ENCODE measurements at regions of chr9 and their contacts with region 1.

Region 1: DNA sequence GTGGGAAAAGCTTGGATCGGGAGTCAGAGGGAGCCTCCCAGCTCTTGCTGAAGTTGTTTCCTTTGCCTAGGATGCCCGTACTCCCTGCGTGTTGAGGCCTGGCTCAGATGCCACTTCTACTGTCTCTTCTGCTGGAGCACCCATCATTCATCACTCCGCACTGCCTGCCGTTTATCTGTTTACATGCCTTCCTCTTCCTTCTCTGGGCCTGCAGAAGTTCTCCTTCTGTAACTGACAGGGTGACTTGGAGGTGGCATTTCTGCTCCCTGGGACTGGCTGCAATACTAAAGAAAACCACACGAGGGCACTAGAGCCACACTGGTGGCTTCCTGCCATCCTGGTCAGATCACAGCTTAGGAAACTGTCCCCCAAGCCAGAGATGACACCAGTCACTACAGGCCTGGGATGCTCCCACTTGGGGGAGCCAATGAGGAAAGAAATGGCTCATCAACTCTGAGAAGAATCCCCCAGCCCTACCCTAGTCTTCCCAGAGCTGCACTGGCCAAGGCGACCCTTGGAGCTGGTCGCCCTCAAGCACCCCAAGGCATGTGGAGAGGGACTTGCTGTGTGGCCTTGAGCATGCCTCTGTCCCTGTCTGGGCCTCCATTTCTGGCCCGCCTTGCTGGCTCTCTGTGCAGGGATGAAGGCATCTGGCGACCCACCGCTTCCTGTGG is 9.7 kb upstream of the SLC25A51 start:
- DNase-seq: peak; percentile 90
- H3K4me3 ChIP-seq: no peak overlapping the region; a peak in 1 of 4 replicates
- H3K27ac ChIP-seq: peak overlapping the region; percentile 30 to 48; a peak in 3 of 4 replicates
- H3K4me1 ChIP-seq: peaks cover 5 to 7% of the 10 kb centered on the region in 2 experiments; a peak in 1 of 4 replicates
- H3K27me3 ChIP-seq: no peaks in the 10 kb centered on the region
- CTCF ChIP-seq: peak; percentile 97
- EP300 ChIP-seq: no peak
- RAD21 ChIP-seq: peak; percentile 100

Region 2: DNA sequence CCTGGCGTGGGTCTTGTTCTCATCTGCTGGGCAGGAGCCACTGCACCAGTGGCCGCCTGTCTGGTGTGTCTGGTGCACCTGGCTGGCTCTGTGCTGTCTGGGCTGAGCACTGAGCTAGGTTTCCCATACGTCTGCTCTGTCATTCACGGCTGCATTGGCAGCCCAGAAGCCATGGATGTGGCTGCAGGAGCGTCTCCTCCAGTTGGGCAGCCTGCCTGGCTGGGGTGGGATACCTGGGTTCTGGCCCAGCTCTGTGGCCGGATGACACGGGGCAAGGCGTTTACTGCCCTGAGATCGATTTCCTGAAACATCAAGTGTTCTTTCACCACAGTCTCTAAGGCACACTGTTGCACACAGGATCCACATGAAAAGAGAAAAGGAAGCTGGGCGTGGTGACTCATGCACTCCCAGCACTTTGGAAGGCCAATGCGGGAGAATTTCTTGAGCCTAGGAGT is 15.9 kb after region 1 on chr9:
- CTCF ChIA-PET with region 1: interaction called, 40 read pairs
- POLR2A ChIA-PET with region 1: no interaction called
- DNase-seq: no peak
- H3K4me3 ChIP-seq: no peak overlapping the region
- H3K27ac ChIP-seq: peak overlapping the region; percentile 68 to 88
- H3K4me1 ChIP-seq: peaks cover 15 to 65% of the 10 kb centered on the region in 2 experiments; a peak in 3 of 4 replicates
- H3K27me3 ChIP-seq: no peaks in the 10 kb centered on the region
- CTCF ChIP-seq: no peak
- EP300 ChIP-seq: 0 out of 4 replicates have a peak, but pooled peaks of 1 of the 2 experiments have one; percentile 33
- RAD21 ChIP-seq: no peak

Region 3: GRCh38 chr9:37976714-37977477 is 63.3 kb after region 1 on chr9:
- CTCF ChIA-PET with region 1: interaction called, 19 read pairs
- POLR2A ChIA-PET with region 1: no interaction called
- DNase-seq: no peak
- H3K4me3 ChIP-seq: no peak overlapping the region
- H3K27ac ChIP-seq: peak overlapping the region; percentile 63 to 96
- H3K4me1 ChIP-seq: peaks cover 36 to 40% of the 10 kb centered on the region in 2 experiments
- H3K27me3 ChIP-seq: no peaks in the 10 kb centered on the region
- CTCF ChIP-seq: no peak
- EP300 ChIP-seq: 0 out of 4 replicates have a peak, but pooled peaks of 1 of the 2 experiments have one; percentile 18
- RAD21 ChIP-seq: no peak

Region 4: DNA sequence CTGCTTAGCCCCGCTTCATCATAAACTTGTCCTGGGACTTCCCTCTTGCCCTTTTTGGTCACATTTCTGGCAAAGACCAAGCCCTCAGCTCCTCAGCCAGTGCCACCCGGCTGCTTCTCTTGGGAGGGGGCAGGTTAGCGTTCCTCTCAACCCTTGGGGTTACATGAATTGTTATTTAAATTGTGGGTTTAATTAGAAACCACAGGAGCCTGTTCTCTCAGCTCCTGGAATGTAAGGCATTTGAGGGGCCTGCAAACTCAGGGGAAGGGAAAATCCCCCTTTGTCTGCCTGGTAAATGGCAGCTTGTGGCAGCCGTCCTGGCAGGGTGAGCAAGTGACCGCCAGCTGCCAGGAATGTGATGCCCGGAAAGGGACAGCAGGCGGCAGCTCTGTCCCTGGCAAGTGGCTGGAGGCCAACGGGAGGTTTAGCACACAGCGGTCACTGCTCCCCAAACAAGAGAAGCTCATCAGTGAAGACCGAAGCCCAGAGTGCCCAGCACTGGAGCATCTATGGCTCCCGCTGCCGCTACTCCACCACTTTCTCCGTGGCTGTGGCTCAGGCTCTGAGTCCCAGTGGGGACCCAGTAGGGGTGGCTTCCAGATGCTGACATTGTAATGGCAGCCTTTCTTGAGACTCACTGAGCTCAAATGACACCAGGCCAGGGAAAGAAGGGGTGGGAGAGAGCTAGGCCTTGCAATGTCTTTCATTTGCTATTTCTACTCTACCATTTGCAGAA is 103.7 kb after region 1 on chr9:
- CTCF ChIA-PET with region 1: interaction called, 74 read pairs
- POLR2A ChIA-PET with region 1: no interaction called
- DNase-seq: peak; percentile 80
- H3K4me3 ChIP-seq: no peak overlapping the region
- H3K27ac ChIP-seq: peak overlapping the region; percentile 97 to 99
- H3K4me1 ChIP-seq: peaks cover 53 to 61% of the 10 kb centered on the region in 2 experiments
- H3K27me3 ChIP-seq: no peaks in the 10 kb centered on the region
- CTCF ChIP-seq: peak; percentile 45
- EP300 ChIP-seq: peak in 1 of 2 experiments; percentile 43; a peak in 1 of 4 replicates
- RAD21 ChIP-seq: peak; percentile 87

Region 5: DNA sequence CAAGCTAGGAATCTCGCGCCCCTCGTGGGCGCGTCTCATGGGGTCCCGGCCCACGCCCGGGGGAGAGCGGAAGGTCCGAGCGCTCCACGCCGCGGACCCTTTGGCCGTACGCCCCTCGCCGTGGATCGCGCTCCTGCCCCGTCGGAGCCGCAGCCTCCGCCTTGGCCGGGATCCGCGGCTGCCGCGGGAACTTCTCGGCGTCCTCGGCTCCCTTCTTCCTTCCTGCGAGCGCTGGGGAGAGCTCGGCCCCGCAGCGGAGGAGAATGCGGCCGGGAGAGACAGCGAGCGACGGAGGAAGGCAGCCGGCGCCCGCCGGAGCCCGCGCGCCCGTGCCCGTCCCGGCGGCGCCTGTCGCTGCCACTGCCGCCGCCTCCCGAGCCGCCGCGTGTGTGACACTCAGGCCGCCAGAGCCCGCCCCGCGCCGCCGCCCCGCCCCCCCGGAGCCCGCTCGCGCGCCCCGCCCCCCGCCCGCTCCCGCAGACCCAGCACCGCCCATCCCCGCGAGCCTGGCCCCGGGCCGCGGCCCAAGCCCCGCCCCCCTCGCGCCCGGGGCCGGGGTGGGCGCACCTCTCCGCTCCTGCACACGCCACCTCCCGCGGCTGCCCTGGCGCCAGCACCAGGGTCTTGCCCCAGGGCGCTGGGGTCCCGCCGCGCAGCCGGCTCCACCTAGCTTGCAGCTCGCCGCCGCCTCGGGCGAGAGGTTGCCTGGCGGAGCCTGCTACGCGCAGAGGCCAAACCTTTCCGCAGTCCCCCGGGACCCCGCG is 155.4 kb after region 1 on chr9 and contains the start of gene SHB:
- CTCF ChIA-PET with region 1: interaction called, 15 read pairs
- POLR2A ChIA-PET with region 1: interaction called, 3 read pairs
- DNase-seq: peak; percentile 95
- H3K4me3 ChIP-seq: peak within 1 kb of the TSS; percentile 76 to 78
- H3K27ac ChIP-seq: peak within 1 kb of the TSS; percentile 79 to 91
- H3K4me1 ChIP-seq: peaks cover 21 to 49% of the 10 kb centered on the region in 2 experiments; a peak in 3 of 4 replicates
- H3K27me3 ChIP-seq: no peaks in the 10 kb centered on the region
- CTCF ChIP-seq: peak; percentile 54
- EP300 ChIP-seq: no peak
- RAD21 ChIP-seq: no peak
- polyA plus RNA-seq, gene SHB: 20.5 and 26.0 TPM in 2 replicates

Region 6: DNA sequence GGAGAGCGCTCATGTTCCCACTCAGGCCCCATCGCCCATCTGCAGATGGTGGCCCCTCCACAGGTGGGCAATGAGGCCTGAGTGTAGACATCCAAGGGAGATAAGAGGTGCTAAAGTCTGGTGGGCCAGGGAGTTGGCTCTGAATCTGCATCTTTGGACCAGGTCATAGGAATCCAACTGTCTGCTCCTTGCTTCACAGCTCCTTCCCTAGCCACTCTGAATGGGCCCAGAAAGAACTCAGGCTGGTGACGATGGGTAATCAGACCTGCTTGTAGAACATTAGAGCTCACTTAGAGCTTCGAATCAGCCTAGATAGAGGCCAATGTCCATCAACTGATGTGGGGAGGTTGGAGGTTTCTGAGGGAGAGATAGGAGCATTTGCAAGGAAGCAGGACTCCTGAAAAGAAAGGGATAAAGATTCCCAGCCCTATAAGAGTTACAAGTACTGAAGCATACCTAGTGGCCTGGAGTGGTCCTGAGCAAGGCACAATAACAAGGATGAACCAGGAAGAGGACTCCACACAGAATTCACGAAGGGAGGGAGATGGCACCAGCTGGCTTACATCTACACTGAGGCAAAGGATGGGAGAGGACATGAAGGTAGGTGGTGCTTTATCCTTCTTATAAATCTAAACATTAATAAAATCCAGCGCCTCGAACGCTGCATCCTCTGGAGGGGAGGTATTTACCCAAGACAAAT is 346.1 kb after region 1 on chr9:
- CTCF ChIA-PET with region 1: interaction called, 16 read pairs
- POLR2A ChIA-PET with region 1: no interaction called
- DNase-seq: no peak
- H3K4me3 ChIP-seq: no peak overlapping the region
- H3K27ac ChIP-seq: no peak overlapping the region
- H3K4me1 ChIP-seq: no peaks in the 10 kb centered on the region; a peak in 1 of 4 replicates
- H3K27me3 ChIP-seq: no peaks in the 10 kb centered on the region
- CTCF ChIP-seq: no peak
- EP300 ChIP-seq: no peak
- RAD21 ChIP-seq: no peak

Region 7: GRCh38 chr9:38362852-38363593 is 449.4 kb after region 1 on chr9:
- CTCF ChIA-PET with region 1: interaction called, 124 read pairs
- POLR2A ChIA-PET with region 1: no interaction called
- DNase-seq: peak; percentile 70
- H3K4me3 ChIP-seq: no peak overlapping the region; a peak in 1 of 4 replicates
- H3K27ac ChIP-seq: peak overlapping the region in 1 of 2 experiments; percentile 17; a peak in 1 of 4 replicates
- H3K4me1 ChIP-seq: peaks cover 0 to 27% of the 10 kb centered on the region in 2 experiments; a peak in 2 of 4 replicates
- H3K27me3 ChIP-seq: no peaks in the 10 kb centered on the region
- CTCF ChIP-seq: peak; percentile 76
- EP300 ChIP-seq: no peak
- RAD21 ChIP-seq: peak; percentile 98